CD4-positive, alpha-beta T cell (primary cell): ENCODE measurements at regions of chr1 and their contacts with region 1.

Region 1: GRCh38 chr1:225428068-225428880 is 436 bp upstream of the LBR start:
- DNase-seq: peak; percentile 83 to 96 (median 90)
- ATAC-seq: peak; percentile 89
- H3K4me3 ChIP-seq: peak overlapping the region; percentile 94
- H3K4me3 Mint-ChIP-seq: peak overlapping the region; percentile 90
- H3K27ac ChIP-seq: peak overlapping the region; percentile 84 to 85
- H3K27ac Mint-ChIP-seq: peak overlapping the region; percentile 84
- H3K4me1 ChIP-seq: peaks cover 33% of the 10 kb centered on the region
- H3K4me1 Mint-ChIP-seq: peaks cover 47% of the 10 kb centered on the region
- H3K27me3 ChIP-seq: no peaks in the 10 kb centered on the region
- H3K27me3 Mint-ChIP-seq: no peaks in the 10 kb centered on the region
- CTCF ChIP-seq: no peak

Region 2: DNA sequence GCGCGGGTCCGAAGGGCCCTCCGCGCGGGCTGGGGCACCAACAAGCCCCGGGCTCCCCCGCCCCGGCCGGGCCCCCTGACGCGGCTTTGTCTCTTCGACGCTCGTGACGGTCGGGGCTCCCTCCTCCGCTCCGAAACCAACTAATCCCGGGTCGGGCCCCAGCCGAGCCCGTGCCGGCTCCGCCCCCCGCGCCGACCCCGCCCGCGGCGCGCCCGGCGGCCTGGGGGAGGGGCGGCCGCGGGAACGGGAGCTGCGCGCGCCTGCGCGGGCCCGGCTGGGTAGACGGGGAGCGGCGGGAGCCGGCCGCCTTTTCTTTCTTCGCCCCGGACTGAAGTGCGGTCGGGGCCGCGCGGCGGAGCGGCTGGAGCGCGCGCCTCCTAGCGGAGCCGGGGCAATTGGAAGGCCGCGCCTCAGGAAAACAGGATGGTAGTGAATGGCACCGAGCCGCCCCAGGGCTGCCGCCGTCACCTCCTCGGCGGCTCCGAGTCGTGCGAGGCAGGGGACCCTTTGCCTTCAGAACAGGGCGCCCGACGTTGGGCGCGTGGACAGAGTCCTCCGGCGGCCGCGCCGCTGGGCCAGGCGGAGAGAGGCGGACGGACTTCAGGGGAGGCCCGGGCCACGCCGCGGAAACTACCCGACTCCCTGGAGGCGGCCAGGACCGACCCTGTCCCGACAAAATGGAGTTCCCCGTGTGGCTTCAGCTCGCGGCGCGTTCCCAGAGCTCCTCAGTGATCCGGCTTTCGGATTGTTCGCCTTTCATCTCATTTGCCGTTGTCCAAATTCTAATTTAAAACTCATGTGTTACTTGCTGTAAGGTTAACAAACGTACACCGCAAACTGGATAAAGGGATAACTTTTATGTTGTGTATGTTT is 1582.2 kb before region 1 on chr1 and contains the start of gene TP53BP2:
- CTCF ChIA-PET with region 1: no interaction called
- POLR2A ChIA-PET with region 1: no interaction called
- intact Hi-C with region 1: loop called in 1 of 2 experiments (anchors 10 kb)
- DNase-seq: peak; percentile 68 to 94 (median 83)
- ATAC-seq: peak; percentile 82
- H3K4me3 ChIP-seq: peak within 1 kb of the TSS; percentile 74
- H3K4me3 Mint-ChIP-seq: peak within 1 kb of the TSS; percentile 99
- H3K27ac ChIP-seq: peak within 1 kb of the TSS; percentile 84 to 93
- H3K27ac Mint-ChIP-seq: peak within 1 kb of the TSS; percentile 100
- H3K4me1 ChIP-seq: peaks cover 30% of the 10 kb centered on the region
- H3K4me1 Mint-ChIP-seq: peaks cover 43% of the 10 kb centered on the region
- H3K27me3 ChIP-seq: no peaks in the 10 kb centered on the region
- H3K27me3 Mint-ChIP-seq: no peaks in the 10 kb centered on the region
- CTCF ChIP-seq: peak; percentile 61
- total RNA-seq, gene TP53BP2: 104 to 119 TPM

Region 3: GRCh38 chr1:224623743-224624333 is 804.4 kb before region 1 on chr1:
- CTCF ChIA-PET with region 1: no interaction called
- POLR2A ChIA-PET with region 1: no interaction called
- intact Hi-C with region 1: loop called in 1 of 2 experiments (anchors 10 kb)
- DNase-seq: peak; percentile 46 to 96 (median 60)
- ATAC-seq: peak; percentile 87
- H3K4me3 ChIP-seq: peak overlapping the region; percentile 24
- H3K4me3 Mint-ChIP-seq: peak overlapping the region; percentile 74
- H3K27ac ChIP-seq: peak overlapping the region; percentile 54 to 83
- H3K27ac Mint-ChIP-seq: peak overlapping the region; percentile 83
- H3K4me1 ChIP-seq: peaks cover 33% of the 10 kb centered on the region
- H3K4me1 Mint-ChIP-seq: peaks cover 38% of the 10 kb centered on the region
- H3K27me3 ChIP-seq: peaks cover 2 to 26% of the 10 kb centered on the region in 2 experiments
- H3K27me3 Mint-ChIP-seq: peaks cover 50% of the 10 kb centered on the region
- CTCF ChIP-seq: no peak

Region 4: DNA sequence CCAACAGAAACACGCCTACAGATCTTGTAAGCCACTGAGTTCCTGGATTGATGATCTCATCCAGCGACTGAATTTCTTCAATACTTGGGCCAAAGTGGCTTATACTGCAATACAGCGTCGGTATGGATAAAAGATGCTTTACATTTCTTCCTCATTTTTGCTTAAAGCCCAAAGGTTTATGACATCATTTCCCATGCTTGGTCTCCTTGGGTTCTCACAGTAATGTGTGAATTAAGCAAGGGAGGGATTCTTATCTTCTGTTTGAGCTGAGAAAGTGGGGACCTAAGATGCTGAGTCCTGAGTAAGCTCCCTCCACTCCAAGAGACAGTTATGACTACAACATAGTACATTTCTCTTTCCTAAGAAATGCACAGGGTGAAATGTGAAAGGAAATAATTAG is 39.9 kb before region 1 on chr1:
- CTCF ChIA-PET with region 1: no interaction called
- POLR2A ChIA-PET with region 1: no interaction called
- intact Hi-C with region 1: no loop called
- DNase-seq: no peak
- ATAC-seq: no peak
- H3K4me3 ChIP-seq: no peak overlapping the region
- H3K4me3 Mint-ChIP-seq: no peak overlapping the region
- H3K27ac ChIP-seq: no peak overlapping the region
- H3K27ac Mint-ChIP-seq: no peak overlapping the region
- H3K4me1 ChIP-seq: peaks cover 2% of the 10 kb centered on the region
- H3K4me1 Mint-ChIP-seq: peaks cover 4% of the 10 kb centered on the region
- H3K27me3 ChIP-seq: no peaks in the 10 kb centered on the region
- H3K27me3 Mint-ChIP-seq: no peaks in the 10 kb centered on the region
- CTCF ChIP-seq: no peak

Region 5: DNA sequence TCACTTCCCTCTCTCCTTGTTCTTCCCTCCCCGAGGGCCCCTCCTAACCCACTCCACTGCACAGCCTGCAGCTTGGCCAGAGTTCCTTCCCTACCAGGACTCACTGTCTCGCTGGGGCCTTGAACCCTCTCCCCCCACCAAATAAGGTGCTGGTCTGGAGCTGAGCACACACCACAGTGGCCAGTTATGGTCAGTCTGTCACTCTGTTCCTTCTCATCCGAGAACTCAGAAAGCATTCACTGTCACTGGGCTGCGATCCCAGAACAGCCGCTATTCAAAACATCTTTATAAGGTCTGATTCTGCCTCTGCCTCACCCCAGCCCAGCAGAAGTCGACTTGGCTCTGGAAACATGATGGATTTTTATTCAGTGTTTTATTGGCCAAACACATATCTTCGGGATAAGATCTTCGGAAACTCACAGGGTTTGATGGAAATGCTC is 19.4 kb after region 1 on chr1:
- CTCF ChIA-PET with region 1: interaction called, 7 read pairs
- POLR2A ChIA-PET with region 1: interaction called, 280 read pairs
- intact Hi-C with region 1: loop called (anchors 1 kb)
- DNase-seq: no peak
- ATAC-seq: no peak
- H3K4me3 ChIP-seq: no peak overlapping the region
- H3K4me3 Mint-ChIP-seq: no peak overlapping the region
- H3K27ac ChIP-seq: no peak overlapping the region
- H3K27ac Mint-ChIP-seq: peak overlapping the region; percentile 51
- H3K4me1 ChIP-seq: peaks cover 59% of the 10 kb centered on the region
- H3K4me1 Mint-ChIP-seq: peaks cover 49% of the 10 kb centered on the region
- H3K27me3 ChIP-seq: no peaks in the 10 kb centered on the region
- H3K27me3 Mint-ChIP-seq: no peaks in the 10 kb centered on the region
- CTCF ChIP-seq: no peak

Region 6: GRCh38 chr1:225467193-225468020 is 39.1 kb after region 1 on chr1:
- CTCF ChIA-PET with region 1: no interaction called
- POLR2A ChIA-PET with region 1: interaction called, 125 read pairs
- intact Hi-C with region 1: loop called (anchors 1 to 2 kb)
- DNase-seq: peak; percentile 67 to 94 (median 79)
- ATAC-seq: peak; percentile 85
- H3K4me3 ChIP-seq: peak overlapping the region; percentile 79
- H3K4me3 Mint-ChIP-seq: peak overlapping the region; percentile 96
- H3K27ac ChIP-seq: peak overlapping the region; percentile 92 to 94
- H3K27ac Mint-ChIP-seq: peak overlapping the region; percentile 99
- H3K4me1 ChIP-seq: peaks cover 56% of the 10 kb centered on the region
- H3K4me1 Mint-ChIP-seq: peaks cover 40% of the 10 kb centered on the region
- H3K27me3 ChIP-seq: no peaks in the 10 kb centered on the region
- H3K27me3 Mint-ChIP-seq: no peaks in the 10 kb centered on the region
- CTCF ChIP-seq: no peak

Region 7: GRCh38 chr1:225485226-225485625 is 57.0 kb after region 1 on chr1:
- CTCF ChIA-PET with region 1: no interaction called
- POLR2A ChIA-PET with region 1: no interaction called
- intact Hi-C with region 1: no loop called
- DNase-seq: no peak
- ATAC-seq: no peak
- H3K4me3 ChIP-seq: no peak overlapping the region
- H3K4me3 Mint-ChIP-seq: no peak overlapping the region
- H3K27ac ChIP-seq: no peak overlapping the region
- H3K27ac Mint-ChIP-seq: no peak overlapping the region
- H3K4me1 ChIP-seq: peaks cover 3% of the 10 kb centered on the region
- H3K4me1 Mint-ChIP-seq: no peaks in the 10 kb centered on the region
- H3K27me3 ChIP-seq: no peaks in the 10 kb centered on the region
- H3K27me3 Mint-ChIP-seq: no peaks in the 10 kb centered on the region
- CTCF ChIP-seq: no peak

Region 8: GRCh38 chr1:225526878-225527277 is 98.6 kb after region 1 on chr1:
- CTCF ChIA-PET with region 1: no interaction called
- POLR2A ChIA-PET with region 1: no interaction called
- intact Hi-C with region 1: no loop called
- DNase-seq: no peak
- ATAC-seq: no peak
- H3K4me3 ChIP-seq: no peak overlapping the region
- H3K4me3 Mint-ChIP-seq: no peak overlapping the region
- H3K27ac ChIP-seq: no peak overlapping the region
- H3K27ac Mint-ChIP-seq: no peak overlapping the region
- H3K4me1 ChIP-seq: no peaks in the 10 kb centered on the region
- H3K4me1 Mint-ChIP-seq: no peaks in the 10 kb centered on the region
- H3K27me3 ChIP-seq: peaks cover 3 to 4% of the 10 kb centered on the region in 2 experiments
- H3K27me3 Mint-ChIP-seq: peaks cover 10% of the 10 kb centered on the region
- CTCF ChIP-seq: no peak

Region 9: DNA sequence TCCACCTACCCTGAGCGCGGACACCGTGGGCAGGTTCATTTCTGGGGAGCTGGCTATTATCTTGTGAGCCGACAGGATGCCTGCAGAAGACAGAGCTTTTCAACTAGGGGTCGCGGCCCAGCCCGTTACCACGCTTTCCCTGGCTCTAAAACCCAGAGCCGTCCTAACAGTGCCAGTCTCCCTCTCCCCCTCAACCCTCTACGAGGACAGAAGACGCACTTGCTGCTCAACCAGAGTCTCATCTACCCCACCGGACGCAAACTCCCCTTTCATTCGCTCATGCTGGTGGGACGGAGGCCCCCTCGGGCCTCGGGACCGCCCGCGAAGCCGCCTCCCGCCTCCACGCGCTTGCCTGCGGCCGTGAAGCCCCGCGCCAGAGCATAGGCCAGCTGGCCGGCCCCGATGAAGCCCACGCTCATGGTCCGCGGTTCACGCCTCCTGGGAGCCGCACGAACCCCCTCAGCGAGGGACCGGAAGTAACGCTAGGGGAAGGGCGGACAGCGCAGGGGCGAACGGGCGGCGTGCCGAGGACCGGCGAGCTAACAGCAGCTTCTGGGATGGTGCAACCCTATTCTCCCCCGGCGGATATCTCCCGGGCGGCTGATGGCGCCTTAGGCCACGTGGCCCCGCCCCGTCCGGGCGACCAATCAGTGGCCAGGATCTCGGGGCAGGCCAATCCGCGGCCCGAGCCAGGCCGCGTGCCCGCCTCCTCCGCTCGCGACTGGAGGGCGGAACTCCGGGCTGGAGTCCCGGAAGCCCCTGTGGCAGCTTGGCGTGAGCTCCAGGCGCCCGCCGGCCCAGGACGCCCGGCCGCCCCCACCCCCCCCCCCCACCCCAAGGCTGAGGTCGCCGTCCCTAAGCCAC is 495.6 kb after region 1 on chr1 and contains the start of gene PYCR2:
- CTCF ChIA-PET with region 1: no interaction called
- POLR2A ChIA-PET with region 1: interaction called, 12 read pairs
- intact Hi-C with region 1: loop called in 1 of 2 experiments (anchors 5 kb)
- DNase-seq: peak; percentile 87 to 98 (median 93)
- ATAC-seq: peak; percentile 98
- H3K4me3 ChIP-seq: peak within 1 kb of the TSS; percentile 95
- H3K4me3 Mint-ChIP-seq: peak within 1 kb of the TSS; percentile 95
- H3K27ac ChIP-seq: peak within 1 kb of the TSS; percentile 79 to 89
- H3K27ac Mint-ChIP-seq: peak within 1 kb of the TSS; percentile 98
- H3K4me1 ChIP-seq: peaks cover 74% of the 10 kb centered on the region
- H3K4me1 Mint-ChIP-seq: peaks cover 54% of the 10 kb centered on the region
- H3K27me3 ChIP-seq: no peaks in the 10 kb centered on the region
- H3K27me3 Mint-ChIP-seq: no peaks in the 10 kb centered on the region
- CTCF ChIP-seq: no peak
- total RNA-seq, gene PYCR2: 24.1 to 26.2 TPM